ENCODE measurements at regions of chr12 and their contacts with region 1.

Region 1: DNA sequence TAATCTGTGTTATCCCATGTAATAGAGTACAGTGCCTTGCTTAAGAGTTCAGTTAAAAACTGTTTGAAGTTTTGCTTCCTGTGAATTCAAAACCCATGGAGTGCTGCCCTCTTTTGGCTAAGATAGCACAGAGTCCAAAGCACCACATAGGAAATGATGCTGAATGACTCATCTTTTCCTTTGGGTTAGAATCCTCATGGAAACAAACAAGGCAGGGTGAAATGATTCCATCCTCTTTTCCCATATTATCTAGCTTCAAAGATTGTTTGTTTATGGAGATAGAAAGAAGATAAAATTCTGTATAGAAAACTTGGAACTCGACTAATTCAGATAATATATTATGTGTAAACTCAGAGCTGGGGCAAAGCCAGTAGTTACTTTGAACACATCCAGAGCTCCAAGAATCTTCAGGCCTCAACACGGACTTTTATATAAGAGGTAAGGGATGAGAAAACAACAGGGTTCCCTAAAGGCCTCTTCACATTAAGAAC is 87.4 kb downstream of the OTOGL start:
- DNase-seq: peak in 6 of 9 experiments; percentile 4 to 65 (median 28)
- ATAC-seq: peak; percentile 54
- H3K4me3 ChIP-seq: no peak overlapping the region
- H3K4me3 Mint-ChIP-seq: no peak overlapping the region
- H3K27ac ChIP-seq: no peak overlapping the region
- H3K27ac Mint-ChIP-seq: no peak overlapping the region
- H3K4me1 ChIP-seq: no peaks in the 10 kb centered on the region
- H3K4me1 Mint-ChIP-seq: no peaks in the 10 kb centered on the region
- H3K27me3 ChIP-seq: no peaks in the 10 kb centered on the region
- H3K27me3 Mint-ChIP-seq: peaks cover 2% of the 10 kb centered on the region
- CTCF ChIP-seq: peak; percentile 62

Region 2: GRCh38 chr12:79547735-79548609 is 638.8 kb before region 1 on chr12:
- CTCF ChIA-PET with region 1: no interaction called
- POLR2A ChIA-PET with region 1: no interaction called
- intact Hi-C with region 1: loop called in 1 of 2 experiments (anchors 5 kb)
- DNase-seq: peak in 2 of 9 experiments; percentile 7 to 28
- ATAC-seq: no peak
- H3K4me3 ChIP-seq: no peak overlapping the region
- H3K4me3 Mint-ChIP-seq: no peak overlapping the region
- H3K27ac ChIP-seq: no peak overlapping the region
- H3K27ac Mint-ChIP-seq: no peak overlapping the region
- H3K4me1 ChIP-seq: no peaks in the 10 kb centered on the region
- H3K4me1 Mint-ChIP-seq: no peaks in the 10 kb centered on the region
- H3K27me3 ChIP-seq: no peaks in the 10 kb centered on the region
- H3K27me3 Mint-ChIP-seq: no peaks in the 10 kb centered on the region
- CTCF ChIP-seq: peak; percentile 20

Region 3: DNA sequence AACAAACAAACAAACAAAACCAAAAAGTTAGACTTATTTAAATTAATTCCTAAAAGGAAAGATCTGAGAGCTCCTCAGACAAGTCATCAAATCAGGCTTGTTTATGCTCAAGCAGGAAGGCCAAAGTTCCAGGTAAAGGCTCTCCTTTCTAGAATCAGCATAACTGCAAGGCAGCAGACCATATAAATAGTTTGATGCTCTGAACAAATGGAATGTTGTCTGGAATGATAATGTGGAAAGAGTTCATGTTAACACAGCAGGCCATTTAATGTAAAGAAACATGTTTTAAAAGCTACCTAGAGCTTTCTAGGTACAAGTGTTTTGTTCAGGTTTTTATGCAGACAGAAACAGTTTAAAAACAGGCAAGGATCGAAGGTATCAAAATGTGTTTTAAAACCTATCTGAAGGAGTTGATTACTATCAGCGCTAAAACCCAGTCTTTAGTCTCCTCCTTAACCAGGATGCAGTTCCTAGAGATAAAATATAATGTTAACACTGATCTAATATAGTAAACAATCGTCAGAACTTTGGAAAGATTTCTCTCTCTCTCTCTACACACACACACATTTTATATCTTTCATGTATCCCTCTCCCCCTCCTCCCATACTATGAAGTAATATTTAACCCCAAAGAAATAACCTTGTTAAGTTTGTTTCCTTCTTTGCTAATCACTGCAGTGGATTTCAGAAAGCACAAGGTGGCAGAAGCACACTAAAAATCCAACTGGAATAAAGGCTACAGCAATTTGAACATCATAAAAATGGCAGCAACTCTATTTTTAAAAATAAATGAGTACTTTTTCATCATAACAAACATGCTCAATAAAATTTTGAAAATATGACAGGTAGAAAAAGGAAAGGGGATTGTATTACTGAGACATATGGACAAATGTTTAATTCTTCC is 631.5 kb before region 1 on chr12:
- CTCF ChIA-PET with region 1: interaction called, 3 read pairs
- POLR2A ChIA-PET with region 1: no interaction called
- intact Hi-C with region 1: loop called in 1 of 2 experiments (anchors 2 kb)
- DNase-seq: peak in 1 of 9 experiments; percentile 20
- ATAC-seq: no peak
- H3K4me3 ChIP-seq: no peak overlapping the region
- H3K4me3 Mint-ChIP-seq: no peak overlapping the region
- H3K27ac ChIP-seq: no peak overlapping the region
- H3K27ac Mint-ChIP-seq: no peak overlapping the region
- H3K4me1 ChIP-seq: no peaks in the 10 kb centered on the region
- H3K4me1 Mint-ChIP-seq: no peaks in the 10 kb centered on the region
- H3K27me3 ChIP-seq: no peaks in the 10 kb centered on the region
- H3K27me3 Mint-ChIP-seq: no peaks in the 10 kb centered on the region
- CTCF ChIP-seq: no peak

Region 4: DNA sequence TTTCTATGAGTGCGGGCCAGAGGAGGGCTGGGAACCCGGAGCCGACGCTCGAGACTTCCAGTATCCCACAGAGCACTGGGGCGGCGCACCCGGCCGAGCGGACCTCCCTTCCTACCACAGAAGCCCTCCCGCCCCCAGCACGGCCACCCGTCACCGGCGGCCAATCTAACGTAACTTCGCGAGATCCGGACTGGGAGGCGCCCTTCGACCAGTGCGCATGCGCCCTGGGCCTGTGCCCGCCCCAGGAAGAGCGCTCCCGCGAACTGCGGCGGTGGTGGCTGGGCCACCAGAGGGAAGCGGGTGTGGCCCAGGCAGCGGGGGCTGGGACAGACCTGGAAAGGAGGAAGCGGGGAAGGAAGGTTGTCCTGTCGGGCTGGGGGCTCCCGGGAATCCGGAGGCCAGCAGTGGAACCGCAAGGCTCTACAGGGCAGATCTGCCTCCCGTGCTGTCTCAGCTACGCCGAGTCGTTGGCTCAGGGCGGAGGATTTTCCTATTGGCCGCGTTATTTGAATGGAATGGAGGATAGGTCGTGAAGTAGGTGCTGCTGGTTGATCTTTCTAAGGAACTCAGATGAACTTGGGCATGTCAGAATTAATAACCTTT is 251.7 kb before region 1 on chr12 and contains the start of gene PPP1R12A:
- CTCF ChIA-PET with region 1: no interaction called
- POLR2A ChIA-PET with region 1: no interaction called
- intact Hi-C with region 1: loop called in 1 of 2 experiments (anchors 1 kb)
- DNase-seq: peak; percentile 83 to 97 (median 93)
- ATAC-seq: peak; percentile 81
- H3K4me3 ChIP-seq: peak within 1 kb of the TSS; percentile 84 to 94
- H3K4me3 Mint-ChIP-seq: peak within 1 kb of the TSS; percentile 99
- H3K27ac ChIP-seq: peak within 1 kb of the TSS; percentile 83 to 92
- H3K27ac Mint-ChIP-seq: peak within 1 kb of the TSS; percentile 99
- H3K4me1 ChIP-seq: peaks cover 26% of the 10 kb centered on the region
- H3K4me1 Mint-ChIP-seq: peaks cover 40% of the 10 kb centered on the region
- H3K27me3 ChIP-seq: no peaks in the 10 kb centered on the region
- H3K27me3 Mint-ChIP-seq: no peaks in the 10 kb centered on the region
- CTCF ChIP-seq: no peak
- total RNA-seq, gene PPP1R12A: 67.6 to 72.4 TPM

Region 5: DNA sequence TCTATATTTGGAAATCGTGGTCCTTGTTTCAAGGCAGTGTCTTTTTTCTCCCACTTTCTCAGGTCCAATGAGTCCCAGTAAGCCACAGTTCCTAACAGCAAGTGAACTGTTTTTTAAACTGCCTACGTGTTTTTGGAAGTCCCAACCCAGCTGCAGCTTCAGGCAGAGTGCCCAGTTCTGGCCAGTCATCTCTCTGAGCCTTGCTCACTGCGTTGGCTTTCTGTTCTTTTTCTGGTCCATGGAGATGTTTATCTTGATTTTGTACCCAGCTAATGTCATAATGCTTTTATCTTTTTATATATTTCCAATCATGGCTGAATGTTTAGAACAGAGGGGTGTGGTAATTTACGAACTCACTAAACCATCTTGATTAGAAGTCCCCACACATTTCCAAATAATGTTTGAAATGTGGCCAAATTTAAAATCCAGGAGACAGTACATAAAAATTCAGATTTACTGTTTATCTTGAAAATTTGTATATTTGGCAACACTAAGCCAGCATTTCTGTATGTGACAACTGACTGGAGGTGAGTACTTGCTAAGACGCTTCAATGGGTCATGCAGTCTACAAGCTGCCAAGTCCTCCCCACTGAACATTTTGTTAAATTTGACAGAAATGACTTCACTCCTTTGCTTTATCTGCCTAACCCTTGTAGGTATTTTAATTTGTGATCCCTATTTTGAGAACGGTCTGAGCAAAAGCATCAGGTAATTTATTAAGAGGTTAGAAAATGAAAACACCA is 133.6 kb before region 1 on chr12:
- CTCF ChIA-PET with region 1: interaction called, 4 read pairs
- POLR2A ChIA-PET with region 1: no interaction called
- intact Hi-C with region 1: loop called (anchors 1 to 2 kb)
- DNase-seq: no peak
- ATAC-seq: no peak
- H3K4me3 ChIP-seq: no peak overlapping the region
- H3K4me3 Mint-ChIP-seq: no peak overlapping the region
- H3K27ac ChIP-seq: no peak overlapping the region
- H3K27ac Mint-ChIP-seq: no peak overlapping the region
- H3K4me1 ChIP-seq: no peaks in the 10 kb centered on the region
- H3K4me1 Mint-ChIP-seq: peaks cover 4% of the 10 kb centered on the region
- H3K27me3 ChIP-seq: no peaks in the 10 kb centered on the region
- H3K27me3 Mint-ChIP-seq: peaks cover 9% of the 10 kb centered on the region
- CTCF ChIP-seq: no peak

Measured in CD8-positive, alpha-beta T cell (primary cell).